CD4-positive, alpha-beta T cell (primary cell): ENCODE measurements at regions of chr3 and their contacts with region 1.

Region 1: DNA sequence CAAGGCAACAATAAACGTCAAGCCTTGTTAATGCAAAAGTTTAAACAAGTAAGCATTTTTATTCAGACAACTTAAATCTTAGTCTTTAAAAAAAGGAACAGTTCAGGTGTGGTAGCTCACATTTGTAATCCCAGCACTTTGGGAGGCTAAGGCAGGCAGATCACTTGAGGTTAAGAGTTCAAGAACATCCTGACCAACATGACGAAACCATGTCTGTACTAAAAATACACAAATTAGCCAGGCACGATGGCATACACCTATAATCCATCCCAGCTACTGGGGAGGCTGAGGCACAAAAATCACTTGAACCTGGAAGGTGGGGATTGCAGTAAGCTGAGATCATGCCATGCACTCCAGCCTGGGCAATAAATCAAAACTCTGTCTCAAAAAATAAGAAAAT is 19.9 kb downstream of the ZBTB20 start:
- DNase-seq: no peak
- ATAC-seq: no peak
- H3K4me3 ChIP-seq: no peak overlapping the region
- H3K4me3 Mint-ChIP-seq: no peak overlapping the region
- H3K27ac ChIP-seq: no peak overlapping the region
- H3K27ac Mint-ChIP-seq: no peak overlapping the region
- H3K4me1 ChIP-seq: no peaks in the 10 kb centered on the region
- H3K4me1 Mint-ChIP-seq: peaks cover 26% of the 10 kb centered on the region
- H3K27me3 ChIP-seq: no peaks in the 10 kb centered on the region
- H3K27me3 Mint-ChIP-seq: no peaks in the 10 kb centered on the region
- CTCF ChIP-seq: no peak

Region 2: GRCh38 chr3:114899186-114899931 is 227.8 kb before region 1 on chr3:
- CTCF ChIA-PET with region 1: no interaction called
- POLR2A ChIA-PET with region 1: no interaction called
- intact Hi-C with region 1: no loop called
- DNase-seq: no peak
- ATAC-seq: no peak
- H3K4me3 ChIP-seq: no peak overlapping the region
- H3K4me3 Mint-ChIP-seq: no peak overlapping the region
- H3K27ac ChIP-seq: no peak overlapping the region
- H3K27ac Mint-ChIP-seq: no peak overlapping the region
- H3K4me1 ChIP-seq: no peaks in the 10 kb centered on the region
- H3K4me1 Mint-ChIP-seq: peaks cover 12% of the 10 kb centered on the region
- H3K27me3 ChIP-seq: no peaks in the 10 kb centered on the region
- H3K27me3 Mint-ChIP-seq: no peaks in the 10 kb centered on the region
- CTCF ChIP-seq: no peak

Region 3: DNA sequence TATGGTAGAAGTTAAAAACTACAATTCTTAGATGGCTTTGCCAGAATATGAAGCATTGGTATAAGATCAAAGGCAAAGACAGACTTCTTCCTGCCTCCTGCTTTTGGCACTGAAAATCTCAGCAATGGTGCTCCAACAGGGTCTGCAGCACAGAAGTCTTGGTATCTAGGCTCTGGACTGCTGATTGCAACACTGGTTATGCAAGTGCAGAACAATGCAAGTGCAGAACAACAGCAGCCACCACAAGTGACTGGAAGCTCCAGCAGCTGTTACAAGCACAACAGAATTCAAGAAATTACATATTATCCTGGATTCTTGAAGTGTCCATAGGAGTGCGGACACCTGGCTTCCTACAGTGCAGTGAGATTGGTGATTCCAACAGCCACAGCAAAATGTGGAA is 13.8 kb before region 1 on chr3:
- CTCF ChIA-PET with region 1: no interaction called
- POLR2A ChIA-PET with region 1: no interaction called
- intact Hi-C with region 1: loop called in 1 of 2 experiments (anchors 2 kb)
- DNase-seq: no peak
- ATAC-seq: no peak
- H3K4me3 ChIP-seq: no peak overlapping the region
- H3K4me3 Mint-ChIP-seq: no peak overlapping the region
- H3K27ac ChIP-seq: no peak overlapping the region
- H3K27ac Mint-ChIP-seq: no peak overlapping the region
- H3K4me1 ChIP-seq: no peaks in the 10 kb centered on the region
- H3K4me1 Mint-ChIP-seq: peaks cover 14% of the 10 kb centered on the region
- H3K27me3 ChIP-seq: no peaks in the 10 kb centered on the region
- H3K27me3 Mint-ChIP-seq: no peaks in the 10 kb centered on the region
- CTCF ChIP-seq: no peak

Region 4: GRCh38 chr3:115284980-115285379 is 157.8 kb after region 1 on chr3:
- CTCF ChIA-PET with region 1: no interaction called
- POLR2A ChIA-PET with region 1: no interaction called
- intact Hi-C with region 1: no loop called
- DNase-seq: no peak
- ATAC-seq: no peak
- H3K4me3 ChIP-seq: no peak overlapping the region
- H3K4me3 Mint-ChIP-seq: no peak overlapping the region
- H3K27ac ChIP-seq: no peak overlapping the region
- H3K27ac Mint-ChIP-seq: no peak overlapping the region
- H3K4me1 ChIP-seq: no peaks in the 10 kb centered on the region
- H3K4me1 Mint-ChIP-seq: no peaks in the 10 kb centered on the region
- H3K27me3 ChIP-seq: no peaks in the 10 kb centered on the region
- H3K27me3 Mint-ChIP-seq: no peaks in the 10 kb centered on the region
- CTCF ChIP-seq: no peak